Pancreas (tissue), 10 donors: ENCODE measurements at regions of chr1 and their contacts with region 1.

Region 1: DNA sequence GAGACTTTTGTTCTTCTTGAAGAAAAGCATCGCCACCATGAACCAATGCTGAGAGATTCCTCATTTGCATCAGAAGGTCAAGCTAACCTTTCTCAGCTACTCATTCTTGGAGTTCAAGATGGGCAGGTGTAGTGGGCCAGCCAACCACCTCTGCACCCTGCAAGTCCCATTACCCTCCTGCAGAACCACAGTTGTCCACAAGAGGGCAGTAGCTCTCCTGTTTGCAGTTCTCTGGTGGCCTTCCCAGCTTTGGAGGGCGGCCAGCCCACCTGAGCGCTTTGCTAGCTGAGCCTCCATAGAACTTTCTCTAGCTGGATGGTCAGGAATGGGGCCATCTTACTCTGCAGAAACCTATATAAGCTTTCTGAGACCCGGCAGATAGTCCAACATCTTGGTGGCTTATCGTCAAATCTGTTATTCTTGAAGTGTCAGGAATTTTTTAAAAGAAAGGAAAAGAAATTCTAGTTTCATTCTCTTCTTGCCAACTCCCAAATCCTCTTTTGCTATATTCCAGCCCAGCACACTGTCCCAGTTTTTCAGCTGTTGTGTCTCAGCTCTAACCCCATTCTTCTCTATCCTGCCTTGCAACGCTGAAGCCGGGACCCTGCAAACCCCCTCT is 11.0 kb upstream of the LMX1A start:
- DNase-seq: peak; percentile 65 to 90 (median 85)
- ATAC-seq: peak; percentile 64 to 90 (median 80)
- H3K4me3 ChIP-seq: no peak overlapping the region
- H3K27ac ChIP-seq: no peak overlapping the region
- H3K4me1 ChIP-seq: no peaks in the 10 kb centered on the region
- H3K27me3 ChIP-seq: peaks cover 0 to 3% (median 0%) of the 10 kb centered on the region in 4 donors
- CTCF ChIP-seq: peak; percentile 90 to 97 (median 94)

Region 2: DNA sequence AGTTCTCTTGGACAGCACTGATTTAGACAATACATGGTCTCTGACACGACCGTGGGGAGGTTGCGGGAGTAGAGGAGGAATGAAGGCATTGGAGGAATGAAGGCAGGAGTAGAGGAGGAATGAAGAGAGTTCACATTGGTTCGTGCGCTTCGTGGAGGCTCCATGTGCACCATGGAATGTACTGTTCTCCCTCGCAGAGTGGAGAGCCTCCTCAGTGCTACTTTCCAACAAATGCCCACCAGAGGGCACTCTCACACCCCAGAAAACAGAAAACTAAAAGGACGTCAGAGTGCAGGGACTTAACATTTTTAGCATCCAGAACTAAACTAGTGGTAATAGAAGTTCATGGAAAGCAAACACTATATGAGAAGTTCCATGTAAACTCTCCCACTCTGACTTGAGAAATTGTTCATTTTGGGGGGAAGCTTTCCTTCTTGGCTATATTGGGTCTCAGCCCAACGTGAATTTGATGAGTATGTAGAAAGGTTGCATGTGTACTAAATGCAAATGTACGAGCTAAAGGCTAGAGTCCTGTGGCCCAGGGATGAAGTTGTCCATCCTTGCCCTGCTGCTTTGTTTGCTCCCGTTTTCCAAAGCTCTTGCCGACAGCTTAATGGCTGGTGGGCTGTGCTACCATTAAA is 222.6 kb before region 1 on chr1:
- intact Hi-C with region 1: loop called in 2 of 3 experiments (anchors 5 to 10 kb)
- DNase-seq: peak in 4 of 6 donors; percentile 17 to 60 (median 46)
- ATAC-seq: peak; percentile 75 to 93 (median 84)
- H3K4me3 ChIP-seq: no peak overlapping the region
- H3K27ac ChIP-seq: no peak overlapping the region
- H3K4me1 ChIP-seq: no peaks in the 10 kb centered on the region
- H3K27me3 ChIP-seq: peaks cover 0 to 13% (median 0%) of the 10 kb centered on the region in 4 donors
- CTCF ChIP-seq: peak; percentile 49 to 76 (median 62)

Region 3: DNA sequence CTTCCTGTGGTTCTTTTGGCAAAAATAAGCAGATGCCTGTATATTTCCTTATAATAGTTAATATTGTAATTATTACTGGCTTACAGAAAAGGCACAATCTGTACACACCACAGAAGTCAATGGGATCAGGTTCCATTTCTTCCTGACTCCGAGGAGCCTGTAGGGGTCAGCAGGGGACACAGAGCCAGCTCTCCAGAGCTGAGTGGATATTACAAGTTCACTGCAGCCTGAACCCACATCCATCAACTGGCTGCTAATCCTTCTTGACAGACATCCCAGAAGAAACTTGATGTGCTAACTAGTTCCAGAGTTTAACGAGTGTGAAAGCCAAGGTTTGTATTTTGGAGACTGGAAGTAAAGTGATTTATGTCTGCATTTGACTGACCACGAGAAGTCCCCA is 214.8 kb before region 1 on chr1:
- intact Hi-C with region 1: loop called in 2 of 3 experiments (anchors 5 to 10 kb)
- DNase-seq: no peak
- ATAC-seq: peak; percentile 28 to 73 (median 64)
- H3K4me3 ChIP-seq: no peak overlapping the region
- H3K27ac ChIP-seq: no peak overlapping the region
- H3K4me1 ChIP-seq: no peaks in the 10 kb centered on the region
- H3K27me3 ChIP-seq: no peaks in the 10 kb centered on the region
- CTCF ChIP-seq: no peak

Region 4: GRCh38 chr1:165257969-165258459 is 109.5 kb before region 1 on chr1:
- intact Hi-C with region 1: loop called in 1 of 3 experiments (anchors 5 kb)
- DNase-seq: peak; percentile 67 to 85 (median 80)
- ATAC-seq: peak; percentile 88 to 93 (median 90)
- H3K4me3 ChIP-seq: no peak overlapping the region
- H3K27ac ChIP-seq: no peak overlapping the region
- H3K4me1 ChIP-seq: peaks cover 0 to 11% (median 5%) of the 10 kb centered on the region in 3 donors
- H3K27me3 ChIP-seq: peaks cover 0 to 4% (median 0%) of the 10 kb centered on the region in 4 donors
- CTCF ChIP-seq: peak; percentile 62 to 77 (median 72)